ENCODE measurements at regions of chr6 and their contacts with region 1.

Region 1: GRCh38 chr6:146700078-146700686 is 101.4 kb downstream of the ADGB start:
- DNase-seq: peak in 1 of 2 donors; percentile 86
- ATAC-seq: peak in 6 of 8 donors; percentile 45 to 75 (median 60)
- H3K4me3 ChIP-seq: no peak overlapping the region
- H3K27ac ChIP-seq: no peak overlapping the region
- H3K4me1 ChIP-seq: no peaks in the 10 kb centered on the region
- H3K27me3 ChIP-seq: no peaks in the 10 kb centered on the region
- CTCF ChIP-seq: peak; percentile 60 to 86 (median 79)

Region 2: DNA sequence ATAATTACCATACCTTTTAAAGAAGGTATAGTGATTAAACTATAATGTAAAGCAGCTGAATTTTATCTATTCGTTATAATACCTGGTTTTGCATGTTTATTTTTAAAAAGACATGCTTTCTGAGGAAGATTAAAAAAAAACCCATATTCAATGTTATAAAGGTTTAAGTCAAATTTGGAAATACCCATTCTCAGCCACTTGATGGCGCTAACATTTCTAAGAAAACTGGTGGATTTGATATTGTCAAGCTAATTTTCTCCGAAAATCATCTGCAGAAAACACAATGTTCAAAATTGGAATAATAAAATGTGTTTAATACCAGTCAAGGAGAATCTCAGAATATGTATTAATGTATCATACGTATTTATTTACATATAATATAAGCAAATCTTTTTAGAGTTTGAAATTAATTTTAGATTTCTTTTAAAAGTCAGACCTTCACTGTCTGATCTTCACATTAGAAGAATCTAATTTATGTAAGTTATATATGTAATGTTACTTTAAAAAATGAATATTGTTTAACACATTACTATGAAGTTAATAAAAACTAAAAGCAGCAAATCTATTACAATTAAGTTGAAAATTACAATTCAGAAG is 771.0 kb before region 1 on chr6:
- intact Hi-C with region 1: loop called in 8 of 10 experiments (anchors 2 to 10 kb)
- DNase-seq: no peak
- ATAC-seq: no peak
- H3K4me3 ChIP-seq: no peak overlapping the region
- H3K27ac ChIP-seq: no peak overlapping the region
- H3K4me1 ChIP-seq: no peaks in the 10 kb centered on the region
- H3K27me3 ChIP-seq: no peaks in the 10 kb centered on the region
- CTCF ChIP-seq: peak; percentile 30 to 78 (median 69)

Region 3: DNA sequence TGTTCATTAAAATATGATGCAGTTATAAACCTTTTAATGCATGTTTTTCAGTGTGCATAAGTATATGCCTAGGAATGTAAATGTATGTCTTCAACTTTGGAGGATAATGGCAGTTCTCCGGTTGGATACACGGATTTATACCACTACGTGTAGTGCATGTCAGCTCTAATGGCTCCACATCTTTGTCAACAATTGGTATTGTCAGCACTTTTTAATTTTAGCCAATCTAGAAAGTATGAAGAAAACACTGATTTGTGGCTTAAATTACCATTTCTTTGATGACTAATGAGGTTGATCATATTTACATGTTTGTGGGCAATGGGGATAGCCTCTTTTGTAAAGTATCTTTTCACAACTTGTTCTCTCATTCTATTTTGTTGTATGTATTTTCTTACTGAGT is 167.5 kb before region 1 on chr6:
- intact Hi-C with region 1: loop called in 2 of 10 experiments (anchors 10 kb)
- DNase-seq: no peak
- ATAC-seq: no peak
- H3K4me3 ChIP-seq: no peak overlapping the region
- H3K27ac ChIP-seq: no peak overlapping the region
- H3K4me1 ChIP-seq: no peaks in the 10 kb centered on the region
- H3K27me3 ChIP-seq: peaks cover 0 to 6% (median 0%) of the 10 kb centered on the region in 7 donors
- CTCF ChIP-seq: no peak

Region 4: DNA sequence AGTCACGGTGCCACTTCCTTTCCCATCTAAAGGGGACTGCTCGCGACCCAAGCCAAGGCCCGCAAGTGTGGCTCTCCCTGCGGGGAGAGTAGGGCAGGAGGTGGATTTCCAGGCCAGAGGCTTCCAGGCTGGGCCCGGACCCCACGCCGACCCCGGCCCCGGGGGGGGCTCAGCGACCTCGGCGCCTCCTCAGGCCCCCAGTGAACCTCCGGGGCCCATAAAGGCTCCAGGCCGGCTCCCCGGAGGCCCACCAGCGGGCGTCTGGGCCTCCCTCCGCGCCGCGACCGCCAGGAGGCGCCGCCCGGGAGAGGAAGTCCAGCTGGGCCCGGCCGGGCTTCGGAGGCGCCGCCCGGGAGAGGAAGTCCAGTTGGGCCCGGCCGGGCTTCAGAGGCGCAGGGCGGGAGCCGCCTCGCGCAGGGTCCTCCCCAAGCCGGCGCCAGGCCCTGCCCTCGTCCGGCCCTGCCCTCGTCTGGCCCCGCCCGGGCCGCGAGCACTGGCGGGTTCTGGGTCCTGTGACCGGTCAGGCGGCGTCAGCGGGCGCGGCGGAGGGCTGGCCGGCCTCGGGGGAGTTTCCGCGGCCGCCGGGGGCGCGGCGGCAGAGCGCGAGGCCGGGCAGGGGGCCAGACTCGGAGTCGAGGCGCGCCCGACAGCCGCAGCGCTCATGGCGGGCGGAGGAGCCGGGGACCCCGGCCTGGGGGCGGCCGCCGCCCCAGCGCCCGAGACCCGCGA is 156.8 kb before region 1 on chr6 and contains the start of gene RAB32:
- intact Hi-C with region 1: loop called in 6 of 10 experiments (anchors 2 to 10 kb)
- DNase-seq: peak; percentile 93 to 94
- ATAC-seq: peak; percentile 98 to 100 (median 99)
- H3K4me3 ChIP-seq: peak within 1 kb of the TSS; percentile 77 to 86 (median 80)
- H3K27ac ChIP-seq: peak within 1 kb of the TSS; percentile 84 to 98 (median 96)
- H3K4me1 ChIP-seq: peaks cover 0 to 43% (median 30%) of the 10 kb centered on the region in 9 donors
- H3K27me3 ChIP-seq: no peaks in the 10 kb centered on the region
- CTCF ChIP-seq: peak; percentile 50 to 93 (median 82)
- total RNA-seq, gene RAB32: 1.6 to 14.5 (median 4.2) TPM

Measured in heart right ventricle (tissue), 16 donors.